Activated CD4-positive, alpha-beta T cell treated with anti-CD3 and anti-CD28 coated beads for 36 hours (primary cell): ENCODE measurements at regions of chr5 and their contacts with region 1.

Region 1: GRCh38 chr5:137888857-137889759 is at the start of gene PKD2L2:
- DNase-seq: peak; percentile 93
- ATAC-seq: peak; percentile 99
- H3K4me3 Mint-ChIP-seq: peak within 1 kb of the TSS; percentile 92
- H3K27ac Mint-ChIP-seq: peak within 1 kb of the TSS; percentile 93
- H3K4me1 Mint-ChIP-seq: peaks cover 21% of the 10 kb centered on the region
- H3K27me3 Mint-ChIP-seq: no peaks in the 10 kb centered on the region
- total RNA-seq, gene PKD2L2: 0.30 TPM in 1 of 2 experiments, not detected in the other

Region 2: GRCh38 chr5:137617528-137618205 is 271.4 kb before region 1 on chr5:
- CTCF ChIA-PET with region 1: no interaction called
- POLR2A ChIA-PET with region 1: no interaction called
- intact Hi-C with region 1: no loop called
- DNase-seq: no peak
- ATAC-seq: no peak
- H3K4me3 Mint-ChIP-seq: no peak overlapping the region
- H3K27ac Mint-ChIP-seq: no peak overlapping the region
- H3K4me1 Mint-ChIP-seq: peaks cover 15% of the 10 kb centered on the region
- H3K27me3 Mint-ChIP-seq: no peaks in the 10 kb centered on the region

Region 3: DNA sequence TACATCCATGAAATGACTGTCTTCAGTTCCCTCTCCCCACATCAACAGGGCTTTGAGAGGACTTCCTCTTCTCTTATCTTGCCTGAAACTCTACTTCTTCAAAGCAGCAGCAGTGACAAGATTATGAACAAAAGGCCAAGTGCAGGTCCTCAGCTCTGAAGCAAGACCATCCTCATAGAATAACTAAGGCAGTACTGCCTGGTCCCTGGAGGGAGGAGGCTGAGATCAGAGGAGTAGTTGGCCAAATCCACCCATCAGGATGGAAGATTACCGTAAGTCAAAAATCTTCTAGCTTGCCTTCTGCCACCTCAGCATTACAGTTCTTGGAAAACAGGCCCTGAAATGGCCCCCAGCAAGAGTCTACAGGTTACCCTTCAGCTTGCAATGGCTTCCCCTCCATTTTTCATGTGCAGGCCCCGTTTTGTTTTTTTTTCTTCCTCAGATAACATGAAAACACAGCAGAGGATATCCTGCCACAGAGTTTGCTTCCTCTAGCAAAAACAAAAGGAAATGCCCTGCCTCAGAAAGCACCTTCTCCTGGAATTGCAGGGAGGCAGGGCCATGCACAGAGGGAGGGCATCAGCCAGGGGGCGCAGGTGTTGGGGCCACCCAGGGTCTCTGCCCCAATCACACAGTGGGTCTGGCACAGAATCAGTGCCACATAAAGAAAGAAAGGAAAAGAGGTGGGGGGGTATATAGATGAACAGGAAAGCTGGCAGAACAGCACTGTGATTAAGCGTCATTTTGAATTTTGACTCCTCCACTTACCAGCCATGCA is 193.3 kb before region 1 on chr5:
- CTCF ChIA-PET with region 1: no interaction called
- POLR2A ChIA-PET with region 1: no interaction called
- intact Hi-C with region 1: loop called in 1 of 2 experiments (anchors 1 kb)
- DNase-seq: peak; percentile 42
- ATAC-seq: peak; percentile 75
- H3K4me3 Mint-ChIP-seq: peak overlapping the region; percentile 40
- H3K27ac Mint-ChIP-seq: peak overlapping the region; percentile 89
- H3K4me1 Mint-ChIP-seq: peaks cover 51% of the 10 kb centered on the region
- H3K27me3 Mint-ChIP-seq: no peaks in the 10 kb centered on the region

Region 4: GRCh38 chr5:137822158-137822764 is 66.8 kb before region 1 on chr5:
- CTCF ChIA-PET with region 1: no interaction called
- POLR2A ChIA-PET with region 1: interaction called, 11 read pairs
- intact Hi-C with region 1: no loop called
- DNase-seq: peak; percentile 15
- ATAC-seq: no peak
- H3K4me3 Mint-ChIP-seq: no peak overlapping the region
- H3K27ac Mint-ChIP-seq: no peak overlapping the region
- H3K4me1 Mint-ChIP-seq: no peaks in the 10 kb centered on the region
- H3K27me3 Mint-ChIP-seq: no peaks in the 10 kb centered on the region

Region 5: GRCh38 chr5:138138949-138139780 is 250.1 kb after region 1 on chr5 and contains the start of gene NME5:
- CTCF ChIA-PET with region 1: no interaction called
- POLR2A ChIA-PET with region 1: no interaction called
- intact Hi-C with region 1: no loop called
- DNase-seq: peak; percentile 30
- ATAC-seq: peak; percentile 30
- H3K4me3 Mint-ChIP-seq: no peak within 1 kb of the TSS
- H3K27ac Mint-ChIP-seq: no peak within 1 kb of the TSS
- H3K4me1 Mint-ChIP-seq: peaks cover 3% of the 10 kb centered on the region
- H3K27me3 Mint-ChIP-seq: peaks cover 4% of the 10 kb centered on the region
- total RNA-seq, gene NME5: not detected